ENCODE measurements at regions of chr6 and their contacts with region 1.

Region 1: GRCh38 chr6:2846873-2847224 is 5.2 kb upstream of the SERPINB1 start:
- DNase-seq: no peak
- ATAC-seq: no peak
- H3K4me3 ChIP-seq: no peak overlapping the region
- H3K4me3 Mint-ChIP-seq: peak overlapping the region in 2 of 3 donors; percentile 27 to 44
- H3K27ac ChIP-seq: peak overlapping the region; percentile 25
- H3K27ac Mint-ChIP-seq: peak overlapping the region; percentile 42 to 79
- H3K4me1 ChIP-seq: peaks cover 23 to 39% of the 10 kb centered on the region in 2 experiments
- H3K4me1 Mint-ChIP-seq: peaks cover 41 to 53% (median 46%) of the 10 kb centered on the region in 3 donors
- H3K27me3 ChIP-seq: no peaks in the 10 kb centered on the region
- H3K27me3 Mint-ChIP-seq: no peaks in the 10 kb centered on the region

Region 2: DNA sequence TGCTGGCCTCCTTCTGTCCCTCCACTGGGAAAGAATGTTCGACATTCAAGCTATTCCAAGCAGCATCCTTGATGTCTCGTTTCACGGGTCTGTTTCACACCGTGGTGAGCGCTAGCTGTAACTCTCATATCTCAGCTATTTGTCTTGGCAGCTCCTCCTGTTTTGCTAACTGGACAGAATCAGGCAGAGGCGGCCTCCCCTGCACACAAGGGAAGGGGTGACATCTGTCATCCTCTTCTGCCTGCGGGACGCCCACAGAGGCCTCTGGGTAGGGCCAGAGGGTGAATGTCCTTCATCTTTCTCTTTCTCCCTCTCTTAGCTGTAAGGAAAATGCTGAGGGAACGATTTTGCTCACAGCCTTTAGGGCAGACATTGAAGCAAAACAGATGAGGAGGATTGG is 368.6 kb before region 1 on chr6:
- CTCF ChIA-PET with region 1: no interaction called
- POLR2A ChIA-PET with region 1: no interaction called
- DNase-seq: no peak
- ATAC-seq: no peak
- H3K4me3 ChIP-seq: no peak overlapping the region
- H3K4me3 Mint-ChIP-seq: no peak overlapping the region
- H3K27ac ChIP-seq: no peak overlapping the region
- H3K27ac Mint-ChIP-seq: no peak overlapping the region
- H3K4me1 ChIP-seq: no peaks in the 10 kb centered on the region
- H3K4me1 Mint-ChIP-seq: no peaks in the 10 kb centered on the region
- H3K27me3 ChIP-seq: peaks cover 0 to 25% of the 10 kb centered on the region in 2 experiments
- H3K27me3 Mint-ChIP-seq: peaks cover 0 to 12% of the 10 kb centered on the region in 2 donors

Region 3: DNA sequence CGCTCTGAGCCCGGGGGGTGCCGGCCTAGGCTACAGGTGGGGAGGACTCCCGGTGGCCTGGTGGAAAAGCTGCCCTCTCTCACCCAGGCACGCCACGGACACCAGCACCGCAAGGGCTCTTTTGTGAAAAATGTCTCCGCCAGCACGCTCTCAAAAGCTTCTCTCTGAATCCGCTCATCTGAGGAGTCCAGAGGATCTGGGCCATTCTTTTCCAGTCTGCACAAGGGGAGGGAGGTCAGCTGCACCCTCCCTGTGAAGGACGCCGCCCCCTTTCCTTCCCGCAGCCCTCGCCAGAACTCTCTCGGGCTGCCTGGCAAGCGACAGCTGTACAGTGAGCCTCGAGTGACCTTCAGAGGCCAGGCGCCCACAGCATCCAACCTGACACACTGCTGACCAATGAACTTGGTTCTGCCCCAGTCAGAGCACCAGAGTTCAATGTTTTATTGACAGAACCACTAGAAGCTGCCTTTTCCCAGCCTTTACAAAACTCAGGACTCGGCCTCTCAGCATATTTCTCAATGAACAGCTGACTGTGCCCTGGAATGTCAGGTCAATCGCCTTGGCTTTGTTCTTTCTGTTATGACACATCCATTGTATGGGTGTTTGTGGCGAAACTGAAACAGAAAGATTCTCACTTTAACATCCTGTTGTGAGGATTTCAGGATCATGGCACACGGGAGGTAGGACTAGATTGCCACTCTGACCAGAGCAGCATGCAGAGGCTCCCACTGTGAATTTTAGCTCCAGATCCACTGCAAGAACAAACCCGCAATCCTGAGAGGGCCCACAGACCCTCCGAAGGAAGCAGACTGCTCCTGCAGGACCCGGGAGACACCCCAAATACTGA is 29.6 kb after region 1 on chr6:
- CTCF ChIA-PET with region 1: interaction called, 6 to 26 read pairs
- POLR2A ChIA-PET with region 1: interaction called in 1 of 2 experiments, 6 read pairs
- DNase-seq: peak in 1 of 35 experiments; percentile 55
- ATAC-seq: peak; percentile 3 to 24 (median 10)
- H3K4me3 ChIP-seq: peak overlapping the region in 1 of 2 donors; percentile 73
- H3K4me3 Mint-ChIP-seq: peak overlapping the region; percentile 66 to 88 (median 86)
- H3K27ac ChIP-seq: peak overlapping the region; percentile 79
- H3K27ac Mint-ChIP-seq: peak overlapping the region; percentile 94 to 99
- H3K4me1 ChIP-seq: peaks cover 32 to 42% of the 10 kb centered on the region in 2 experiments
- H3K4me1 Mint-ChIP-seq: peaks cover 77 to 85% (median 83%) of the 10 kb centered on the region in 3 donors
- H3K27me3 ChIP-seq: no peaks in the 10 kb centered on the region
- H3K27me3 Mint-ChIP-seq: no peaks in the 10 kb centered on the region

Region 4: GRCh38 chr6:2900821-2901644 is 54.2 kb after region 1 on chr6:
- CTCF ChIA-PET with region 1: interaction called in 1 of 2 experiments, 23 read pairs
- POLR2A ChIA-PET with region 1: interaction called, 3 to 5 read pairs
- DNase-seq: no peak
- ATAC-seq: no peak
- H3K4me3 ChIP-seq: peak overlapping the region; percentile 66 to 94
- H3K4me3 Mint-ChIP-seq: peak overlapping the region; percentile 99 to 100 (median 99)
- H3K27ac ChIP-seq: peak overlapping the region; percentile 42
- H3K27ac Mint-ChIP-seq: peak overlapping the region; percentile 96
- H3K4me1 ChIP-seq: peaks cover 24 to 53% of the 10 kb centered on the region in 2 experiments
- H3K4me1 Mint-ChIP-seq: peaks cover 55 to 70% (median 62%) of the 10 kb centered on the region in 3 donors
- H3K27me3 ChIP-seq: no peaks in the 10 kb centered on the region
- H3K27me3 Mint-ChIP-seq: no peaks in the 10 kb centered on the region

Region 5: GRCh38 chr6:2931970-2932748 is 85.3 kb after region 1 on chr6:
- CTCF ChIA-PET with region 1: interaction called, 10 to 72 read pairs
- POLR2A ChIA-PET with region 1: interaction called, 6 to 23 read pairs
- DNase-seq: peak; percentile 63 to 92 (median 77)
- ATAC-seq: peak; percentile 82 to 99 (median 94)
- H3K4me3 ChIP-seq: no peak overlapping the region
- H3K4me3 Mint-ChIP-seq: peak overlapping the region in 1 of 3 donors; percentile 58
- H3K27ac ChIP-seq: no peak overlapping the region
- H3K27ac Mint-ChIP-seq: peak overlapping the region; percentile 48 to 84
- H3K4me1 ChIP-seq: peaks cover 14 to 18% of the 10 kb centered on the region in 2 experiments
- H3K4me1 Mint-ChIP-seq: peaks cover 18 to 24% (median 23%) of the 10 kb centered on the region in 3 donors
- H3K27me3 ChIP-seq: no peaks in the 10 kb centered on the region
- H3K27me3 Mint-ChIP-seq: no peaks in the 10 kb centered on the region

Region 6: GRCh38 chr6:2988426-2989331 is 141.8 kb after region 1 on chr6:
- CTCF ChIA-PET with region 1: interaction called, 4 to 25 read pairs
- POLR2A ChIA-PET with region 1: interaction called, 5 to 6 read pairs
- DNase-seq: peak; percentile 35 to 87 (median 65)
- ATAC-seq: peak; percentile 75 to 79 (median 76)
- H3K4me3 ChIP-seq: peak overlapping the region; percentile 81 to 97
- H3K4me3 Mint-ChIP-seq: peak overlapping the region; percentile 92 to 93 (median 93)
- H3K27ac ChIP-seq: peak overlapping the region; percentile 96
- H3K27ac Mint-ChIP-seq: peak overlapping the region; percentile 100
- H3K4me1 ChIP-seq: peaks cover 14 to 26% of the 10 kb centered on the region in 2 experiments
- H3K4me1 Mint-ChIP-seq: peaks cover 23 to 37% (median 30%) of the 10 kb centered on the region in 3 donors
- H3K27me3 ChIP-seq: no peaks in the 10 kb centered on the region
- H3K27me3 Mint-ChIP-seq: no peaks in the 10 kb centered on the region

Region 7: GRCh38 chr6:4185419-4185818 is 1338.6 kb after region 1 on chr6:
- CTCF ChIA-PET with region 1: no interaction called
- POLR2A ChIA-PET with region 1: no interaction called
- DNase-seq: no peak
- ATAC-seq: no peak
- H3K4me3 ChIP-seq: no peak overlapping the region
- H3K4me3 Mint-ChIP-seq: no peak overlapping the region
- H3K27ac ChIP-seq: no peak overlapping the region
- H3K27ac Mint-ChIP-seq: no peak overlapping the region
- H3K4me1 ChIP-seq: no peaks in the 10 kb centered on the region
- H3K4me1 Mint-ChIP-seq: no peaks in the 10 kb centered on the region
- H3K27me3 ChIP-seq: peaks cover 0 to 3% of the 10 kb centered on the region in 2 experiments
- H3K27me3 Mint-ChIP-seq: peaks cover 7% of the 10 kb centered on the region in 2 donors

Measured in T-cell (primary cell).